A673 (cell line): ENCODE measurements at regions of chr10 and their contacts with region 1.

Region 1: DNA sequence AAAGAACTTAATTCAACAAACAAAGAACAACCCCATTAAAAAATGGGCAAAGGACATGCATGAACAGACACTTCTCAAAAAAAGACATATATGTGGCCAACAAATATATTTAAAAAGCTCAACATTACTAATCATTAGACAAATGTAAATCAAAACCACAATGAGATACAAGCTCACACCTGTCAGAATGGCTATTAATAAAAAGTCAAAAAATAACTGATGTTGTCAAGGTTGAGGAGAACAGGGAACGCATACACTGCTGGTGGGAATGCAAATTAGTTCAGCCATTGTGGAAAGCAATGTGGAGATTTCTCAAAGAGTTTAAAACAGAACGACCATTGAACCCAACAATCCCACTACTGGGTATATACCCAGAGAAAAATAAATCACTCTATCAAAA is 19.1 kb downstream of the ZFAND4 start:
- DNase-seq: no peak
- H3K4me3 ChIP-seq: no peak overlapping the region
- H3K27ac ChIP-seq: no peak overlapping the region
- H3K4me1 ChIP-seq: no peaks in the 10 kb centered on the region
- H3K27me3 ChIP-seq: no peaks in the 10 kb centered on the region
- CTCF ChIP-seq: no peak

Region 2: GRCh38 chr10:45640049-45640448 is 13.4 kb before region 1 on chr10:
- CTCF ChIA-PET with region 1: no interaction called
- POLR2A ChIA-PET with region 1: interaction called, 21 read pairs
- intact Hi-C with region 1: no loop called
- DNase-seq: no peak
- H3K4me3 ChIP-seq: no peak overlapping the region
- H3K27ac ChIP-seq: no peak overlapping the region
- H3K4me1 ChIP-seq: no peaks in the 10 kb centered on the region
- H3K27me3 ChIP-seq: no peaks in the 10 kb centered on the region
- CTCF ChIP-seq: no peak

Region 3: DNA sequence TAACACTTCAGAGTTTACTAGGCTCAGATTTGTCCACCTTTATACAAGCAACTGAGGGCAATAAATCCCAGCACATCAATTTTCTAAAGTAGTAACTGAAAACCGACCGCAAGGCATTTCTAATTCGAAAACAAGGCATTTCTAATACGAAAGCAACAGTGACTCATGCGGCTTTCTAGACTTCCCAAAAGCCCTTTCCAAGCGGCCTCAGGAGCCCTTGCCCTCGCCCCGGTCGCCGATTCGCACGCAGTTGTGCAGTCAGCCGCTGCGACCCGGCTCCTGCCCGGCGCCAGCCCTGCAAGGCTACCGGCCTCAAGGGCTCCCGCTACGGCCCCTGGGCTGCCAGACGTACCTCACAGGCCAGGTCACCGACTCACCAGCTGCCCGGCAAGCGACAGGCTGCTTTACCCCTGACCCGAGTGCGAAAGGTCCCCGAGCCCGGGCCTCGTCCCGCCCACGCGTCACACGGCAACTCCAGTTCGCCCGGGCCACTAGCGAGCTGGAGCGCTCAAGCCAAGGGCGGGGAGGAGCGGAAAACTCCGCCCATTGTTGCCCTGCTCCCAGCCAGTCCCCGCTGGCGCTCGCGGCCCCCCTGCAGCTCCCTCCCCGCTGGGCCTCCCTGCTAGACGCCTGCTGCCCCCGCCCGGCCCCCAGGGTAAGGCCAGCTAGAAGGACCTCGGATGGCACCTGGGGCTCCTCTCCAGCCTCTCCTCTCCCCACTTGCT is 369.7 kb after region 1 on chr10:
- CTCF ChIA-PET with region 1: no interaction called
- POLR2A ChIA-PET with region 1: no interaction called
- intact Hi-C with region 1: no loop called
- DNase-seq: peak; percentile 82
- H3K4me3 ChIP-seq: peak overlapping the region; percentile 79
- H3K27ac ChIP-seq: peak overlapping the region; percentile 77
- H3K4me1 ChIP-seq: peaks cover 4% of the 10 kb centered on the region
- H3K27me3 ChIP-seq: no peaks in the 10 kb centered on the region
- CTCF ChIP-seq: 0 out of 2 replicates have a peak, but pooled peaks have one; percentile 32